ENCODE measurements at regions of chr12 and their contacts with region 1.

Region 1: DNA sequence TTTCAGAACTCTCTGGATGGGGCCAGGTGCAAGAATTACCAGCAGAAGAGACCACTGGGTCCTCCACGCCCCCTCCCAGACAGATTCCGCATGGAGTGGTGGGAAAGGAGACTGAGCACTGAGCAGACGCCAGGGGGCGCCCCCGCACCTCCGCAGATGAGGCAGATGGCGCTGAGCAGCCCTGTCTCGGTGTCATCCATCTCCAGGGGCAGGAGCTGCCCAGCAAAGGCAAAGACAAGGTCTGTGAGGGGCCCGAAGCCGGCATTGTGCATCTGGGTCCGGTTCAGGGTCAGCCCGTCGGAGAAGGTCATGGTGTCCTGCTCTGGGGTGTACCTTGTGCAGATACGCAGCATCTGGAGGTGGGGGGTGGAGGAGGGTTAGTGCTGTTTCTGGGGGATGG is 6.3 kb upstream of the ITGB7 start:
- DNase-seq: peak; percentile 89
- H3K4me3 Mint-ChIP-seq: no peak overlapping the region
- H3K27ac Mint-ChIP-seq: no peak overlapping the region
- H3K4me1 Mint-ChIP-seq: peaks cover 61% of the 10 kb centered on the region
- H3K27me3 Mint-ChIP-seq: no peaks in the 10 kb centered on the region

Region 2: DNA sequence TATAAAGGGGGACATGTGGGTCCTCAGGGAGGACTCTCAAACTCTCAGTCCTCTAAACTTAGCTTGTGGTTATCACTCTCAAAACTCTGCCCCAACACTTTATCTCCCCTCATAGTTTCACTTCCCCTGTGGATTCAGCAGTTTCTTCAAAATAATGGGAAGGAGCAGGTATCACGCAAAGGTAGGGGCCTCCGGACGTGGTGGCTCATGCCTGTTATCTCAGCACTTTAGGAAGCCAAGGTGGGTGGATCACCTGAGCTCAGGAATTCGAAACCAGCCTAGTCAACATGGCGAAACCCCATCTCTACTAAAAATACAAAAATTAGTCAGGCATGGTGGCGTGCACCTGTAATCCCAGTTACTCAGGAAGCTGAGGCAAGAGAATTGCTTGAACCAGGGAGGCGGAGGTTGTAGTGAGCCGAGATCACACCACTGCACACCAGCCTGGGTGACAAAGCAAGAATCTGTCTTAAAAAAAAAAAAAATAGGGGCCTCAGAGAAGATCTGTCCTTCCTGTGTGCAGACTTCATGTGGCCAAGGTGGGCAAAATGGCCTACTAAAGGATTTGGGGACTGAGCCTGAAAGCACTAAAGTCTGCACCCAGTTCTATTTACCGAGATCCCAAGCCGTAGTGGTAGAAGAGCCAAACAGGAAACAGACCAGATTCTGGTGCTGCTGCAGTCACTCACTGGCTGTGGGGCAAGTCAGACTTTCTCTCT is 12.7 kb before region 1 on chr12:
- CTCF ChIA-PET with region 1: interaction called, 38 read pairs
- POLR2A ChIA-PET with region 1: interaction called, 4 read pairs
- intact Hi-C with region 1: loop called (anchors 1 kb)
- DNase-seq: peak; percentile 77
- H3K4me3 Mint-ChIP-seq: peak overlapping the region; percentile 45
- H3K27ac Mint-ChIP-seq: peak overlapping the region; percentile 88
- H3K4me1 Mint-ChIP-seq: peaks cover 72% of the 10 kb centered on the region
- H3K27me3 Mint-ChIP-seq: no peaks in the 10 kb centered on the region

Region 3: DNA sequence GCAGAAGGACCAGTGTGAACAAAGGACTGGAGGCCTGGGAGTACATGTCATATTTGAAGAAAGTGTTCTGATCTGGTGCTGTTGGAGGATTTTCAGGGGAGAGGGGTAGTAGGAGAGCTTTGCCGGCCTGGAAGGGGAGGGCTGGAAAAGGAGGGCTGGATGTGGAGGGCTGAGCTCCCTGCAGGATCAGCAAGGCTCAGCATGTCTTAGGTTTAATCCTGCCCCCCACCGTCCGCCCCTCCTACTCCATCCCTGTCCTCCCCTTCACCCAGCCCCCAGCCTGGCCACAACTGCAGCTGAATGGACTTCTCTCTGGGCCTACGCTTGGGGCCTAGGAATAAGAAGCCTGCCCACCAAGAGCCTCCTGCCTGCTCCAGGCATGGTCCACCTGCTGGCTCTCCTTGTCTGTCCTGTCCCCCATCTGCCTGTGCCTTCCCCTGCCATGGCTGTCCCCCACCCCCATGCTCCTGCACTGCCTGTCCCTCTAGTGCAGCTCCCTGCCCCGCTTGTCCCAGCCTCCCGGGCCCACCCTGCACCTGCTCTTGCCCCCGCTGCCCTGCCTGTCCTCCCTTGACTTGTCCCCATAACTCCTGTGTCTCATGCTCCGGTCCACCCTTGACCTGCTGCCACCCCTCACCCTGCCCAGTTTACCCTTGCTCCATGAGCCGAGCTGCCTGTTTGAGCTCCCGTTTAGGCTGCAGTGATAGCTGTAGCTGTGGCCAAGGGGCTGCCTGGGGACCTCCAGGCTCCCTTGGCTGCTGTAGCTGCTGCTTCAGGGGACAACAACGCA is 28.5 kb after region 1 on chr12:
- CTCF ChIA-PET with region 1: interaction called, 40 read pairs
- POLR2A ChIA-PET with region 1: interaction called, 18 read pairs
- intact Hi-C with region 1: no loop called
- DNase-seq: no peak
- H3K4me3 Mint-ChIP-seq: no peak overlapping the region
- H3K27ac Mint-ChIP-seq: no peak overlapping the region
- H3K4me1 Mint-ChIP-seq: peaks cover 8% of the 10 kb centered on the region
- H3K27me3 Mint-ChIP-seq: no peaks in the 10 kb centered on the region

Region 4: GRCh38 chr12:53267999-53268647 is 54.8 kb after region 1 on chr12 and contains the start of gene ESPL1:
- CTCF ChIA-PET with region 1: interaction called, 109 read pairs
- POLR2A ChIA-PET with region 1: interaction called, 24 read pairs
- intact Hi-C with region 1: no loop called
- DNase-seq: peak; percentile 93
- H3K4me3 Mint-ChIP-seq: peak within 1 kb of the TSS; percentile 97
- H3K27ac Mint-ChIP-seq: peak within 1 kb of the TSS; percentile 95
- H3K4me1 Mint-ChIP-seq: peaks cover 36% of the 10 kb centered on the region
- H3K27me3 Mint-ChIP-seq: no peaks in the 10 kb centered on the region
- total RNA-seq, gene ESPL1: 70.0 to 77.2 TPM

Region 5: DNA sequence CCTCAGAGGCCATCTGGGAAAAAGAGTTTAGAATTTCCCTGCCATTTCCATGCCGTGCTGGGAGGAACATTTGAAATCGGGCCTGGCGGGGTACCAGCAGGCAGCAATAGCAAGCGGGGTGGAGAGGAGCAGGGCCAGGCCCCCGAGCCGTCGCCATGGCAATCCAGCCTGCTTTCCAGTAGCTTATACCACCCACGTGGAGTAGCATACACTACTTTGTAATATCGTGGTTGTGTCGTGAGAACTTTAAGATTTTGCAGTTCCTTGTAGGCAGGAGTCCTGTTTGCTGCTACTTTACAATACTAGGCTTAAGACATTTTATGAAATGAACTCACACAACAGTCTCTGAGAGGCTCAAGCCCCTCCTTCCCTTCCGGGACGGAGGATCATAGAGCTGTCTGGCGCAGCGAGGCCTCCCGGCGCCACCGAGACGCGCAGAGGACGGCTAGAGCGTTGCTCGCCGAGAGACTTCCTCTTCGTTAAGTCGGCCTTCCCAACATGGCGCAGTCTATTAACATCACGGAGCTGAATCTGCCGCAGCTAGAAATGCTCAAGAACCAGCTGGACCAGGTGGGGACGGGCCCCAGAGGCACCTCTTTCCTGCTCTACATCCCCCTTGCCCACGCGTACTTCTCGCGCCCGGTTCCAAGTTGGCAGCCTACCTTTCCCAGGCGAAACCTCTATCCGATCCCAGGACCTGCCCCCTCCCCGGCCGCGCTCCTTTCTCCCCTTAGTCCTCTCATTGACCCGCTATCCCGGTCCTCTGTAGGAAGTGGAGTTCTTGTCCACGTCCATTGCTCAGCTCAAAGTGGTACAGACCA is 81.9 kb after region 1 on chr12 and contains the start of gene PFDN5:
- CTCF ChIA-PET with region 1: interaction called, 172 read pairs
- POLR2A ChIA-PET with region 1: interaction called, 5 read pairs
- intact Hi-C with region 1: no loop called
- DNase-seq: peak; percentile 92
- H3K4me3 Mint-ChIP-seq: peak within 1 kb of the TSS; percentile 99
- H3K27ac Mint-ChIP-seq: peak within 1 kb of the TSS; percentile 94
- H3K4me1 Mint-ChIP-seq: peaks cover 53% of the 10 kb centered on the region
- H3K27me3 Mint-ChIP-seq: no peaks in the 10 kb centered on the region
- total RNA-seq, gene PFDN5: 354 to 359 TPM

Region 6: GRCh38 chr12:53332744-53333143 is 119.4 kb after region 1 on chr12:
- CTCF ChIA-PET with region 1: no interaction called
- POLR2A ChIA-PET with region 1: no interaction called
- intact Hi-C with region 1: no loop called
- DNase-seq: no peak
- H3K4me3 Mint-ChIP-seq: no peak overlapping the region
- H3K27ac Mint-ChIP-seq: no peak overlapping the region
- H3K4me1 Mint-ChIP-seq: no peaks in the 10 kb centered on the region
- H3K27me3 Mint-ChIP-seq: peaks cover 30% of the 10 kb centered on the region